ENCODE measurements at regions of chr6 and their contacts with region 1.

Region 1: DNA sequence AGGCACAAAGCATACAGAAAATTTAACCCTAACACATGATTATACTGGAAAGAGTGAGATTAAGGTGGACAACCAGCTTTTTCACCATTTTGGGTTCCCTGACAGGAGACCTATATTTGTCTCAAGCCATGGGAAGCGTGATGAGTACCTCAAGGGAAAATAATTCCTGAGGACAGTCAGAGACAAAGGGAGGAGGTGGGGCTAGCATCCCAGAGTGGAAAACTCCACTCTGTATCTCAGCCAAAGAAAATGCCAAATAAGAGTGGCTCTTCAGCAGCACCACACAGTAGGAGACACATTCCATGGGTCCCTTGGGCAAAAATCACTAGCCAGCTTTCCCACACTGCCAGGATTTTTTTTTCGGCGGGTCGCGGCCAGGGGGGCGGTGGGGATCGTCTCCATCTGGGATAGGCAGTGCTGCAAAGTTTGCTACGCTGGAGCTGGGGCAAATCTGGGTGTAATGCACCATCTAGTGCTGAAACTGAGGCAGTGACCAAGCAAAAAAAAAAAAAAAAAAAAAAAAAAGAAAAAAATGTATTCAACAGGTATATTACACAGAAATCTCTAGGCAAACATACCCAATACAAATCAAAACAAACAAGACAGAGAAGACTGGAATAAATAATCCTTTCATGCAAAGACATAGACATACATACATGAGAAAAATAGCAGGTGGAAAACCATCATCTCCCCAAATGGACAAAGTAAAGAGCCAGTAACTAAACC is 77.3 kb upstream of the SLC35F1 start:
- DNase-seq: peak; percentile 71
- H3K4me3 ChIP-seq: peak overlapping the region; percentile 35
- H3K27ac ChIP-seq: no peak overlapping the region
- H3K4me1 ChIP-seq: no peaks in the 10 kb centered on the region
- H3K27me3 ChIP-seq: no peaks in the 10 kb centered on the region
- CTCF ChIP-seq: peak; percentile 74

Region 2: GRCh38 chr6:117346142-117346930 is 483.4 kb before region 1 on chr6:
- CTCF ChIA-PET with region 1: no interaction called
- POLR2A ChIA-PET with region 1: no interaction called
- intact Hi-C with region 1: loop called (anchors 5 kb)
- DNase-seq: peak; percentile 39
- H3K4me3 ChIP-seq: no peak overlapping the region
- H3K27ac ChIP-seq: no peak overlapping the region
- H3K4me1 ChIP-seq: no peaks in the 10 kb centered on the region
- H3K27me3 ChIP-seq: peaks cover 22% of the 10 kb centered on the region
- CTCF ChIP-seq: peak; percentile 59; the same call in 1 of the 2 replicates

Region 3: DNA sequence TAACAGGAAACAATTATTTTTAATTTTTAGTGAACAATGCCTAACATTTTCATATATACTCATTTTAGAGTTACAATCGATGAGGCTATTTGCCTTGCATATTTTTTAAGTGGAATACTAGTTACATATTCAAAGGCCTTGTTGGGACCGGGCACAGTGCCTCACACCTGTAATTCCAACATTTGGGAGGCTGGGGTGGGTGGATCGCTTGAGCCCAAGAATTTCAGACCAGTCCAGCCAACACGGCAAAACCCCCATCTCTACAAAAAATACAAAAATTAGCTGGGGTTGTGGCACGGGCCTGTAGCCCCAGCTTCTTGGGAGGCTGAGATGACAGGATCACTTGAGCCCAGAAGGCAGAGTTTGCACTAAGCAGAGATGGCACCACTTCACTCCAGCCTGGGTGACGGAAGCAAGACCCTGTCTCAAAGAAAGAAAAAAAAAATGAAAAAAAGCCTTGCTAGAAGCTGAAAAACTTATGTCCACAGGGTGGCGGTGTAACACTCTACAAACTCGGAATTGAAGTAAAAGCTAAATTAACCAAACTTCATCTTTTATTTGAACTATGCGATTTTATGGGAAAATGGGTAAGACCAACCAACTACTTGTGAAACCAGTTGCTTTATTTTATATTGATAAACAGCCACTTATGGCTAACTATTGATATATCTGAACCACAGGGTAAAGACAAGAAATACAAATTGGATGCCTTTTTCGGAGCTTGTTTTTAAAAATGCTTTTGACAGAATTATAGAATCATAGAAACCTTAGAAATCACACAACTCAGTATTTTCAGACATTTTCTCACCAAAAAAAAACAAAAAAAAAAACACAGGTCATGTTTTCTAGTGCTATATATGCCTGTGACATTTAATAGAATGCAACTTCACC is 380.0 kb before region 1 on chr6:
- CTCF ChIA-PET with region 1: interaction called, 3 read pairs
- POLR2A ChIA-PET with region 1: no interaction called
- intact Hi-C with region 1: loop called (anchors 5 kb)
- DNase-seq: peak; percentile 78
- H3K4me3 ChIP-seq: no peak overlapping the region
- H3K27ac ChIP-seq: no peak overlapping the region
- H3K4me1 ChIP-seq: no peaks in the 10 kb centered on the region
- H3K27me3 ChIP-seq: peaks cover 42% of the 10 kb centered on the region
- CTCF ChIP-seq: peak; percentile 79

Region 4: DNA sequence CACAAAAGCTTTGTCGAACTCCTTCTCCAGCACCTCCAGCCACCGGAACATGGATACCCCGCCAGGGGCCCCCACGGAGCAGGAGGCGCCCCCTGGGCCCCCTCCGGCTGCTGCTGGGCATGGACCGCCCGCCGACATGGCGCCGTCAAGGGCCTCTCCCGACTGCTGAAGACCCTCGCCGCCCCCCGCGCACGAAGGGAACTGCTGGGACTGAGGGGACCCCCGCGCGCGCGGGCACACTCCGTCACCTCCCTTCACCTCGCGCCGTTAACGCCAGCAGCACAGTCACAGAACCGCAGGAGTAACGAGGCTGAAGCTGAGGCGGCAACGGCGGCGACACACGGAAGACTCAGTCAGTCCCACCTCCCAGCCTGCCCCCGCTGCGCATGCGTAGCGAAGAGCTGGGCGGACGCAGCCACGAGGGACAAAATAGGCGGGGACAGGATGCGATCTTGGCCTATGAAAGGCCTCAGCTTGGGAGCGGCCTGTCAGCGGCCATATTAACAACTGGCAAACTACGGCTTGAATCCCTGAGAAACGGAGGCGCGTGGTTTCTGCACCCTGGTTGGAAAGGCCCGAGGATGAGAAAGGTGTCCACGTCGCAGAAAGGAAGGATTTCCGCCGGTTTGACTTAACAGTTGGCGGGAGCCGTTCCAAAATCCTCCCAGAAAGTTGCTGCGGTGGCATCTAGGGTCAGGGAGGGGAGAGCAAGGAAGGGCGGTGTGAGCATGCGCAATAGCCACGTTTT is 227.4 kb before region 1 on chr6 and contains the start of gene GOPC:
- CTCF ChIA-PET with region 1: no interaction called
- POLR2A ChIA-PET with region 1: no interaction called
- intact Hi-C with region 1: loop called (anchors 5 kb)
- DNase-seq: peak; percentile 99
- H3K4me3 ChIP-seq: peak within 1 kb of the TSS; percentile 74
- H3K27ac ChIP-seq: peak within 1 kb of the TSS; percentile 82
- H3K4me1 ChIP-seq: peaks cover 11% of the 10 kb centered on the region
- H3K27me3 ChIP-seq: no peaks in the 10 kb centered on the region
- CTCF ChIP-seq: 0 out of 2 replicates have a peak, but pooled peaks have one; percentile 24
- total RNA-seq, gene GOPC: 18.9 and 20.8 TPM in 2 replicates

Region 5: DNA sequence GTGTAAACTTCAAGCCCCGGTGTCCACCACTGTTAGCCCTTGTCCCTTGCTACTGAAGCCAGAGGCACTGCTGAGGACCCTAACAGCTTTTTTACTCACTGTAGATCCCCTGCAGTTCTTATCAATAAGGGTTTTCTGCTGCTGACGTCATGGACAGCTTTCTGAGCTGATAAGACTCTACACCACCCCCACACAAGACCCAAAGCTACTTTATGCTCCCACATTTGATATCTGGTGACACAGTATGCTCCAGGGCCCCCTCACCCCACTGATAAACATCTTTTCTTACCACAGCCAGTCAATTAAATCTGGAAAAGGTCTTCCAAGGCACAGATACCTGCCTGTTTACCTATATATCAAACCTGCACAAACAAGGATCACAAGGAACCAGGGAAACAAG is 89.2 kb before region 1 on chr6:
- CTCF ChIA-PET with region 1: interaction called, 12 read pairs
- POLR2A ChIA-PET with region 1: no interaction called
- intact Hi-C with region 1: no loop called
- DNase-seq: no peak
- H3K4me3 ChIP-seq: no peak overlapping the region
- H3K27ac ChIP-seq: no peak overlapping the region
- H3K4me1 ChIP-seq: no peaks in the 10 kb centered on the region
- H3K27me3 ChIP-seq: no peaks in the 10 kb centered on the region
- CTCF ChIP-seq: no peak

Region 6: DNA sequence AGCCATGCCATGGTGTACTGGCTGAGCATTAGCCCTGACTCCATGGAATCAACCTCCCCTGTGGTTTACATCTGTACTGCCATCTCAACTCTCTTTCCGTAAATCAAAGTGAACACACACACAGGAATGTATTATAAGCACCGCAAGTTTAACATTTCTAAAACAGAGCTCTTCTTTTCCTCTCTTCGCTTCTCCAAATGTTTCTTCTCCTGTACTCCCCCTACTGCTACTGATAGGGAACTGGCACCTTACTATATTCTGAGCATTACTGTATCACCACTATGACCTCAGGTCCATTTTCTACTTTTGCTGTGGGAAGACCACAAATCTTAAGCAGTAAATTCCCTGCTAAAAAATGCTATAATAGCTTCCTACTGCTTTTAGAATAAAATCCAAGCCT is 53.3 kb before region 1 on chr6:
- CTCF ChIA-PET with region 1: no interaction called
- POLR2A ChIA-PET with region 1: no interaction called
- intact Hi-C with region 1: no loop called
- DNase-seq: peak; percentile 27
- H3K4me3 ChIP-seq: no peak overlapping the region
- H3K27ac ChIP-seq: no peak overlapping the region
- H3K4me1 ChIP-seq: no peaks in the 10 kb centered on the region
- H3K27me3 ChIP-seq: peaks cover 63% of the 10 kb centered on the region
- CTCF ChIP-seq: peak; percentile 50

Region 7: GRCh38 chr6:117810269-117810668 is 19.5 kb before region 1 on chr6:
- CTCF ChIA-PET with region 1: no interaction called
- POLR2A ChIA-PET with region 1: no interaction called
- intact Hi-C with region 1: no loop called
- DNase-seq: no peak
- H3K4me3 ChIP-seq: no peak overlapping the region
- H3K27ac ChIP-seq: no peak overlapping the region
- H3K4me1 ChIP-seq: no peaks in the 10 kb centered on the region
- H3K27me3 ChIP-seq: no peaks in the 10 kb centered on the region
- CTCF ChIP-seq: no peak

Region 8: GRCh38 chr6:118509009-118509617 is 679.4 kb after region 1 on chr6:
- CTCF ChIA-PET with region 1: no interaction called
- POLR2A ChIA-PET with region 1: no interaction called
- intact Hi-C with region 1: loop called (anchors 10 kb)
- DNase-seq: peak; percentile 31
- H3K4me3 ChIP-seq: no peak overlapping the region
- H3K27ac ChIP-seq: no peak overlapping the region
- H3K4me1 ChIP-seq: no peaks in the 10 kb centered on the region
- H3K27me3 ChIP-seq: no peaks in the 10 kb centered on the region
- CTCF ChIP-seq: peak; percentile 81

Measured in A673 (cell line).